ENCODE measurements at regions of chr20 and their contacts with region 1.

Region 1: GRCh38 chr20:18669620-18670019 is 81.8 kb downstream of the DTD1 start:
- DNase-seq: no peak
- ATAC-seq: peak; percentile 19; the same call in 2 of the 3 replicates
- H3K4me3 ChIP-seq: no peak overlapping the region
- H3K27ac ChIP-seq: no peak overlapping the region
- H3K4me1 ChIP-seq: peaks cover 25% of the 10 kb centered on the region
- H3K27me3 ChIP-seq: no peaks in the 10 kb centered on the region
- CTCF ChIP-seq: no peak
- EP300 ChIP-seq: no peak
- POLR2A ChIP-seq: no peak
- RAD21 ChIP-seq: no peak

Region 2: DNA sequence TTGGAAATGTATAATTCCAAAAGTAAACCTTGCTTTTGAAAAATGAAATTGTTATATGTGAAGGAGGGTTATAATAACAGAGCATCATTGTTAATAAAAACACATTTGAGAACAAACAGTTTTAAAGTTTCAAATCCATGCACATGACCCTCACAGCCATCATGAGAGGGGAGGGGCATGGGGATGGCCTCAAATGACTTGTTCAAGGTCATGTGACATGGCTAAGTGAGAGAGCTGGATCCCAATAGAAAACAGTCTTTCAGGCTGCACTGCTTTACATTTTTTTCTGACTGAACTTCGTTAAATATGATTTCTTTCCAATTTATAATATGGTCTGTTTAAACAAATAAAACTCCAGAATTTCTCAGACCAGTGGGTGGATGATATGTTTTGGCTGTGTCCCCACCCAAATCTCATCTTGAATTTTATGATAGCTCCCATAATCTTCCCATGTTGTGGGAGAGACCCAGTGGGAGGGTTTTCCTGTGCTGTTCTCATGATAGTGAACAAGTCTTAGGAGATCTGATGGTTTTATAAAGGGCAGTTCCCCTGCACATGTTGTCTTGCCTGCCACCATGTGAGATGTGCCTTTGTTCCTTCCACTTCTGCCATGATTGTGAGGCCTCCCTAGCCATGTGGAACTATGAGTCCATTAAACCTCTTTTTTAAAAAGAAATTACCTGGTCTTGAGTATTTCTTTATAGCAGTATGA is 15.7 kb before region 1 on chr20:
- CTCF ChIA-PET with region 1: no interaction called
- POLR2A ChIA-PET with region 1: no interaction called
- in situ Hi-C with region 1: no loop called
- intact Hi-C with region 1: loop called (anchors 2 kb)
- DNase-seq: no peak
- ATAC-seq: no peak
- H3K4me3 ChIP-seq: no peak overlapping the region
- H3K27ac ChIP-seq: no peak overlapping the region
- H3K4me1 ChIP-seq: peaks cover 10% of the 10 kb centered on the region
- H3K27me3 ChIP-seq: no peaks in the 10 kb centered on the region
- CTCF ChIP-seq: no peak
- EP300 ChIP-seq: no peak
- POLR2A ChIP-seq: no peak
- RAD21 ChIP-seq: no peak

Region 3: DNA sequence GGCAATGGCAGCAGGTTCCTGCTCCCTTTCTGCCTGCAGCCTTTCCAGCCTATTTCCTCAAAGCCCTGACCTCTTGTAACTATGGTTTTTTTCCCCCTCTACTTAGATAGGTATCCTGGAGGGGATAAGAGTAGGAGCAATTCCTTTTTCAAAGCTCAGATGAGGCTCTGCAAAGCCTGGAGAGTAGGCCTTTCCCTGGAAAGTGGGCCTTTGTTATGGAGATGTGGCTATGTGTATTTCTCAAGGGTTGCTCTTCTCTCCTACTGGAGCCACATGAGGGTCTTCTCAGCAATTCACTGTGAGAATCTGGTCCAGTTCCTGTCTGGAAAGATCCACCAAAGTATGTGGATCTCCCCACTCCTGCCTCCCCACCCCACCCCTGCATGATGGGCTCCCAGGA is 14.2 kb after region 1 on chr20:
- CTCF ChIA-PET with region 1: no interaction called
- POLR2A ChIA-PET with region 1: no interaction called
- in situ Hi-C with region 1: no loop called
- intact Hi-C with region 1: no loop called
- DNase-seq: no peak
- ATAC-seq: no peak
- H3K4me3 ChIP-seq: no peak overlapping the region
- H3K27ac ChIP-seq: no peak overlapping the region
- H3K4me1 ChIP-seq: peaks cover 14% of the 10 kb centered on the region
- H3K27me3 ChIP-seq: no peaks in the 10 kb centered on the region
- CTCF ChIP-seq: no peak
- EP300 ChIP-seq: no peak
- POLR2A ChIP-seq: no peak
- RAD21 ChIP-seq: no peak

Measured in HepG2 (cell line).